IMR-90 (cell line): ENCODE measurements at regions of chr1 and their contacts with region 1.

Region 1: DNA sequence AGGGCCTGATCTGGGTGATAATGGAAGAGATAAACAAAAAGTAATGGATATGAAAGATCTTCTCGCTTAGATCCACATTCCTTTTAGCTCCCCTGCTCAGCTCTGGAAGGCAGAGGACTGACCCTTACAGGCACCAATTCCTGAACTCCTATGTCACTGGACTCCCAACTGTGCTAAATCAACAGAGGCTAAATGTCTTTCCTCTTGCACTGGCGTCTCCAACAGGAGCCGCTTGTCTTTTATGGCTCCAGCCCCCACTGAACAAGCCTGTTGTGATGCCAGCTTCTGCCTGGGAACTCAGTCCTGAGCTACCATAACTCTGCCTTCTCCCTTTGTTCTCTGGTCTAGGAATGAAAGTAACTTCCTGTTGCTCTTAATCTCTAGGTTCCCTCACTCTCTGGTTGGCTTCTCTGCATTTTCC is 142.1 kb upstream of the COL11A1 start:
- DNase-seq: peak; percentile 41
- ATAC-seq: peak; percentile 79
- H3K4me3 ChIP-seq: no peak overlapping the region
- H3K27ac ChIP-seq: peak overlapping the region; percentile 62; the same call in 1 of the 2 replicates
- H3K4me1 ChIP-seq: no peaks in the 10 kb centered on the region; the same call in 1 of the 2 replicates
- H3K27me3 ChIP-seq: no peaks in the 10 kb centered on the region
- CTCF ChIP-seq: no peak
- POLR2A ChIP-seq: no peak
- RAD21 ChIP-seq: no peak

Region 2: DNA sequence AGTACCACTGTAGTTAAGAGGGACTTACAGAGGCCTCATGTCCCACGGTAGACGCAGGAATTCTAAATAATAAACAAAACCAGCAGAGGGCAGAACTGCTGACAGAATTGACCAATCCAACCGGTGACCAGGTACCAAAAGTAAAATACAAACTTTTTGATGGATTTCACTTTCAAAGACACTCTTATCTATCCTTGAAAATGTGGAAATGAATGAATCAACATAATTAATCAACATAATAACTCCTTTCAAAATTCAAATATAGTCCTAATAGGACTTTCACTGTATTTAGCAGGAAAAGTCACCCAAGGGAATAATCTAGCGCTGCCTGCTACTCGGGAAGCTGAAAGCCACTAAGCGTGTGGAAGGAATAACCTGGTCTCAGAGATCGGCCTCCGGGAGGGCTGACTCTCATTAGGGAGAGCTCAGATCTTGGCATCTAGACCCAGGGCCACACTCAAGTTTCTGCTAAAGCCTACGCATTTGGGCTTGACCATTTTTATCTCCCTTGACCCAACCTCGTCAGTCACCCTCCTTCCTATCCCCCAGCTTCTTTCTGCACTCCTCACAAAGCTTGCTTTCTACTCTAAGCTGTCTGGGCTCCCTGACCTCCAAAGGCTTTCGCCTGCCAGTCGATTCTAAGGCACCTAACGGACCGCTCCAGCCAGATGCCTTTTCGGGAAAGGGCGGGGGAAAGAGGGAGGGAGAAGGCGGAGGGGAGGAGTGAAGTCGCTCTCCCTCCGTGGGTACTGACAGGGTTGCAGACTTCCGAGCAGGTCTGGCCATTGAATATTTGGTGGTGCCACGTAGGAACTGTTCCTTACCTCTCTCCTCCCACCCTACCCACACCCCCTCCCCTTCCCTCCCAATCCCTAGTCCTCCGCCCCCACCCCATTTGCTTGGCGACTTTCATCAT is 143.8 kb before region 1 on chr1:
- CTCF ChIA-PET with region 1: no interaction called
- POLR2A ChIA-PET with region 1: no interaction called
- dilution Hi-C with region 1: no loop called
- in situ Hi-C with region 1: no loop called
- intact Hi-C with region 1: loop called (anchors 1 kb)
- DNase-seq: peak; percentile 30
- ATAC-seq: peak; percentile 72
- H3K4me3 ChIP-seq: peak overlapping the region; percentile 55
- H3K27ac ChIP-seq: no peak overlapping the region
- H3K4me1 ChIP-seq: no peaks in the 10 kb centered on the region
- H3K27me3 ChIP-seq: peaks cover 2% of the 10 kb centered on the region
- CTCF ChIP-seq: peak; percentile 54
- POLR2A ChIP-seq: no peak
- RAD21 ChIP-seq: peak; percentile 53

Region 3: DNA sequence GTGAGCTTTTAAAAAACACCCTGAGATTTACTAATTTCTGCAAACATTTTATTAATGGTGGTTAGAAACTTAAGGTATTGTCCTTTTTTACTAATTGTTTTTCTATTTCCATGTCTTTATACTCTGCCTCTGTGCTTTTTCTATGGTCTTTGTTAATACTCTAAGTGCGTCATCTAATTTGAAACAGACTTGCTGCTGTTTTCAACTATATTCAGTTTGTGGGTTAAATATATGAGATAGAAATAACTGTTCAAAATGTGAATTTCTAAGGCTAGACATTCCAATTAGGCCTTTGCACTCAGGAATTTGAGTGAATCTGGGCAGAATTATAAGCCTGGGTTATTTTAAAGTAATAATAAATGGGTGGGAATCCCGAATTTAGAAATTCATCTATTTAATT is 59.7 kb before region 1 on chr1:
- CTCF ChIA-PET with region 1: no interaction called
- POLR2A ChIA-PET with region 1: no interaction called
- dilution Hi-C with region 1: no loop called
- in situ Hi-C with region 1: no loop called
- intact Hi-C with region 1: no loop called
- DNase-seq: no peak
- ATAC-seq: no peak
- H3K4me3 ChIP-seq: no peak overlapping the region
- H3K27ac ChIP-seq: no peak overlapping the region
- H3K4me1 ChIP-seq: no peaks in the 10 kb centered on the region
- H3K27me3 ChIP-seq: no peaks in the 10 kb centered on the region
- CTCF ChIP-seq: no peak
- POLR2A ChIP-seq: no peak
- RAD21 ChIP-seq: no peak

Region 4: GRCh38 chr1:103218821-103219220 is 31.6 kb before region 1 on chr1:
- CTCF ChIA-PET with region 1: no interaction called
- POLR2A ChIA-PET with region 1: no interaction called
- dilution Hi-C with region 1: no loop called
- in situ Hi-C with region 1: no loop called
- intact Hi-C with region 1: loop called (anchors 5 kb)
- DNase-seq: no peak
- ATAC-seq: no peak
- H3K4me3 ChIP-seq: no peak overlapping the region
- H3K27ac ChIP-seq: no peak overlapping the region
- H3K4me1 ChIP-seq: no peaks in the 10 kb centered on the region
- H3K27me3 ChIP-seq: no peaks in the 10 kb centered on the region
- CTCF ChIP-seq: no peak
- POLR2A ChIP-seq: no peak
- RAD21 ChIP-seq: no peak

Region 5: GRCh38 chr1:103275725-103276124 is 25.3 kb after region 1 on chr1:
- CTCF ChIA-PET with region 1: no interaction called
- POLR2A ChIA-PET with region 1: no interaction called
- dilution Hi-C with region 1: no loop called
- in situ Hi-C with region 1: no loop called
- intact Hi-C with region 1: no loop called
- DNase-seq: no peak
- ATAC-seq: no peak
- H3K4me3 ChIP-seq: no peak overlapping the region
- H3K27ac ChIP-seq: no peak overlapping the region
- H3K4me1 ChIP-seq: no peaks in the 10 kb centered on the region; the same call in 1 of the 2 replicates
- H3K27me3 ChIP-seq: no peaks in the 10 kb centered on the region
- CTCF ChIP-seq: no peak
- POLR2A ChIP-seq: no peak
- RAD21 ChIP-seq: no peak